ENCODE measurements at regions of chr11 and their contacts with region 1.

Region 1: GRCh38 chr11:64894070-64894796 is 15.8 kb upstream of the EHD1 start:
- DNase-seq: no peak
- ATAC-seq: peak; percentile 97
- H3K4me3 ChIP-seq: no peak overlapping the region
- H3K27ac ChIP-seq: no peak overlapping the region
- H3K4me1 ChIP-seq: no peaks in the 10 kb centered on the region; the same call in 1 of the 2 replicates
- H3K27me3 ChIP-seq: no peaks in the 10 kb centered on the region
- CTCF ChIP-seq: peak; percentile 93 to 99 (median 94)
- EP300 ChIP-seq: no peak
- POLR2A ChIP-seq: no peak; the same call in 1 of the 2 replicates
- RAD21 ChIP-seq: peak; percentile 94

Region 2: DNA sequence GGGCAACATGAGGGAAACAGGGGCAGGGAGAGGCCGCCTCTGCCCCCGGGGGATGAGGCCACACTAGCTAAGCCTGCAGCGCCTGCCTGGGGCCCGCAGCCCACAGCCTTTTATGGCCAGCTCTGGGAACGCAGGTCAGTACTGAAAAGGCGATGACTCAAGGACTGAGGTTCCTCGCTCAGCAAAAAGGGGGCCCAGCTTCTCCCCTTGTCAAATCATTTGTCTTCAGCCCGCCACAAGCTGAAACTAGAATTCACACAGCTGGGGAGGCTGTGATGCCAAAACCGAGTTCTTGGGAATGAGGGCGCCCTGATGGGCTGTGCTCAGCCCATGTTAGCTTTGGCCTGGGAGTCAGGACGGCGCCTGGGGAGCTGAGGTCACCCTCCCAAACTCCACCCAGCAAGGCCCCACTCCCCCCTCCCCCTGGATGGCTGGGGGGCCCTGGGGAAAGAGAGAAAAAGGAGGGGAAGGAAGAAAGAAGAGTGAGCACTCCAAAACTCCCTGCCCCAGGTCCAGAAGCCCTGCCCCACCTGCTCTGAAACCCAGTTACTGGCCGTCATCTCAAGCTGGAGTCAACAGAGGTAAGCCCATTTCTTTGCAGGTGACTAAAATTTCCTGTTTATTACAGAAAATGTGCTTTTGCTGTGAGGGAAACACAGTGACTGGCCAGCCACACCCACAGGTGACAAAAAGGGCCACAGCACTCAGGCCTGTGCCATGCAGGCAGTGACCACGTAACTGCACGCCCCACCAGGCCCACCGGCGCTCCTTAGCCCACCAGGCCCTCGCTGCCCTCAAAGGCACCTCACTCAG is 29.6 kb before region 1 on chr11:
- CTCF ChIA-PET with region 1: interaction called, 1,208 read pairs
- POLR2A ChIA-PET with region 1: interaction called, 620 read pairs
- RAD21 ChIA-PET with region 1: interaction called, 8 read pairs
- SMC1A ChIA-PET with region 1: interaction called, 12 read pairs
- in situ Hi-C with region 1: no loop called
- intact Hi-C with region 1: no loop called
- DNase-seq: no peak
- ATAC-seq: peak; percentile 59
- H3K4me3 ChIP-seq: peak overlapping the region; percentile 44
- H3K27ac ChIP-seq: peak overlapping the region; percentile 99
- H3K4me1 ChIP-seq: peaks cover 91% of the 10 kb centered on the region
- H3K27me3 ChIP-seq: no peaks in the 10 kb centered on the region
- CTCF ChIP-seq: no peak
- EP300 ChIP-seq: peak in 1 of 2 experiments; percentile 26; a peak in 2 of 4 replicates
- POLR2A ChIP-seq: peak; percentile 78
- RAD21 ChIP-seq: no peak

Region 3: DNA sequence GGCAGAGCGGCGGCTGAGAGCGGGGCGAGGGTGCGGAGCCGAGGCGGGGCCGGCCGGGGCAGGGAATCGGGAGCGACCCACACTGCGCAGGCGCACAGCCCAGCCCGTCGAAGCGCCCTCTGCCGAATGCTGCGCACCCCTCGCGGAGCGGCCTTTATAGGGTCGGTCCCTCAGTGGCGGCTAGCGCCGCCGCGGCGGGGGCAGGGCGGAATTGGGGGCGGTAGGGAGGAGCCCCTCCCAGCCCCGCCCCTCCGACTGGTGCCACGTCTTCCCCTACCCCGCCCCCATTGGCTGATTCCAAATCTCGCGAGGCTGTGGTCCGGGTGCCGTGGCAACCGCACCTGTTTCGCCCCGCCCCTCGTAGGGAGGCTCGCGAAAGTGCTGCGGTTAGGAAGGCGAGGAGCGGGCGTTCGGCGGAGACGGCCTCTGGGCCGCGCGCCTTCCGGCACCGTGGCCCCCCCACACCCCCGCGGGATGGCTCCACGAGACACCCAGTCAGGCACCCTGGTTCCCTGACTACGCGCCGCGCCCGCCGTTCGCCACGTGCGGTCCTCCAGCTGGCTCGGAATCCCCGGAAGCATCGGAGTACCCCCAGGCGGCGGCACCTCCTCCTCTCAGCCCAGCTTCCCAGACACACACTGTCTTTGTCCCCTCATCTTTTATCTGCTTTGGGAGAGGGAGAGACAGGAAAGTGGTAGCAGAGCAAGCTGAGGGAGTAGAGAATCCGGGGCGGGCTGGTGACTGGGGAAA is 15.6 kb before region 1 on chr11 and contains the start of gene EHD1:
- CTCF ChIA-PET with region 1: interaction called, 63 read pairs
- POLR2A ChIA-PET with region 1: interaction called, 5 read pairs
- RAD21 ChIA-PET with region 1: interaction called, 4 read pairs
- SMC1A ChIA-PET with region 1: interaction called, 4 read pairs
- in situ Hi-C with region 1: no loop called
- intact Hi-C with region 1: no loop called
- DNase-seq: peak; percentile 92
- ATAC-seq: peak; percentile 78
- H3K4me3 ChIP-seq: peak within 1 kb of the TSS; percentile 96
- H3K27ac ChIP-seq: peak within 1 kb of the TSS; percentile 97
- H3K4me1 ChIP-seq: peaks cover 30% of the 10 kb centered on the region
- H3K27me3 ChIP-seq: no peaks in the 10 kb centered on the region
- CTCF ChIP-seq: peak; percentile 41 to 91 (median 54); a peak in 5 of 6 replicates
- EP300 ChIP-seq: 0 out of 4 replicates have a peak, but pooled peaks of 1 of the 2 experiments have one; percentile 35
- POLR2A ChIP-seq: peak; percentile 100
- RAD21 ChIP-seq: no peak
- polyA plus RNA-seq, gene EHD1: 1.0 to 2.2 TPM

Measured in GM12878 (cell line).